Activated CD4-positive, alpha-beta T cell treated with anti-CD3 and anti-CD28 coated beads for 36 hours (primary cell): ENCODE measurements at regions of chr16 and their contacts with region 1.

Region 1: GRCh38 chr16:11806721-11807120 is 9.7 kb upstream of the ZC3H7A start:
- DNase-seq: no peak
- ATAC-seq: no peak
- H3K4me3 Mint-ChIP-seq: no peak overlapping the region
- H3K27ac Mint-ChIP-seq: no peak overlapping the region
- H3K4me1 Mint-ChIP-seq: peaks cover 9% of the 10 kb centered on the region
- H3K27me3 Mint-ChIP-seq: no peaks in the 10 kb centered on the region

Region 2: GRCh38 chr16:11639925-11640899 is 166.5 kb before region 1 on chr16:
- CTCF ChIA-PET with region 1: no interaction called
- POLR2A ChIA-PET with region 1: no interaction called
- intact Hi-C with region 1: loop called in 1 of 2 experiments (anchors 5 kb)
- DNase-seq: no peak
- ATAC-seq: no peak
- H3K4me3 Mint-ChIP-seq: no peak overlapping the region
- H3K27ac Mint-ChIP-seq: no peak overlapping the region
- H3K4me1 Mint-ChIP-seq: peaks cover 8% of the 10 kb centered on the region
- H3K27me3 Mint-ChIP-seq: no peaks in the 10 kb centered on the region

Region 3: GRCh38 chr16:11721781-11722467 is 84.8 kb before region 1 on chr16:
- CTCF ChIA-PET with region 1: no interaction called
- POLR2A ChIA-PET with region 1: no interaction called
- intact Hi-C with region 1: loop called in 1 of 2 experiments (anchors 2 kb)
- DNase-seq: no peak
- ATAC-seq: no peak
- H3K4me3 Mint-ChIP-seq: no peak overlapping the region
- H3K27ac Mint-ChIP-seq: peak overlapping the region; percentile 45
- H3K4me1 Mint-ChIP-seq: peaks cover 3% of the 10 kb centered on the region
- H3K27me3 Mint-ChIP-seq: no peaks in the 10 kb centered on the region